Endothelial cell of umbilical vein (primary cell): ENCODE measurements at regions of chr10 and their contacts with region 1.

Region 1: GRCh38 chr10:21533467-21534279 is at the start of gene MLLT10:
- DNase-seq: peak; percentile 97
- H3K4me3 ChIP-seq: peak within 1 kb of the TSS; percentile 80 to 93 (median 83)
- H3K27ac ChIP-seq: peak within 1 kb of the TSS; percentile 60
- H3K4me1 ChIP-seq: peaks cover 17% of the 10 kb centered on the region
- H3K27me3 ChIP-seq: no peaks in the 10 kb centered on the region
- CTCF ChIP-seq: no peak
- POLR2A ChIP-seq: peak; percentile 83
- total RNA-seq, gene MLLT10: 54.0 and 54.6 TPM in 2 replicates

Region 2: DNA sequence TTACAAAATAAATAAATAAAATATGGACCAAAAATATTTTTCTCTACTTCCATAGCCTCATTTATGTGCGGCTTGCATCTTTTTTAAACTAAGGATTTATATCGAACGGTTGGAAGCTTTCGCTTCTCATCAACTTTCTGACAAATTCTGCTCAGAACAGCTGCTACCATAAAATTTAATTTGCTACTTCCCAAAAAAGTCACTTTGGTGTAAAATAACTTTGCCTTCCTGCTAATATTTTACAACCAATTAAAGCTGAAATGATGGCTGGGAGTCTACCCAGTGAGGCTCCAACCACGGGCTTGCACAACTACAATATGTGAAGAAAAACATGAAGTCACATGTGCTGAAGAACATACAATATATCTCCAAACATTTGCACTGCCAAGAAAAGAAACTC is 383.5 kb before region 1 on chr10:
- CTCF ChIA-PET with region 1: no interaction called
- POLR2A ChIA-PET with region 1: no interaction called
- dilution Hi-C with region 1: no loop called
- intact Hi-C with region 1: no loop called
- DNase-seq: no peak
- H3K4me3 ChIP-seq: no peak overlapping the region
- H3K27ac ChIP-seq: no peak overlapping the region
- H3K4me1 ChIP-seq: no peaks in the 10 kb centered on the region
- H3K27me3 ChIP-seq: peaks cover 0 to 3% of the 10 kb centered on the region in 2 experiments
- CTCF ChIP-seq: no peak
- POLR2A ChIP-seq: no peak

Region 3: DNA sequence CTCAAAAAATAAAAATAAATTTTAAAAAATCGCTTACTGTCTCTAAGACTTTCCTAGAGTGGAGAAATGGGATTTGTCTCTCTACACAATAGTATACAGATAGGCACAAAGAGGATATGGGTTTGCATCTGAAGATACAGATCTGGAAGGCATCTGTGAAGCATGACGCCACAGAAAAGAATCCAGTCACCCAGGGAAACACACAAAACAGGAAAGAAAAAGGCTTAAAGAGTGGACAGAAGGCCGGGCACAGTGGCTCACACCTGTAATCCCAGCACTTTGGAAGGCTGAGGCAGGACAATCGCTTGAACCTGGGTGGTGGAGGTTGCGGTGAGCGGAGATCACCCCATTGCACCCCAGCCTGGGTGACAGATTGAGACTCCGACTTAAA is 69.5 kb before region 1 on chr10:
- CTCF ChIA-PET with region 1: no interaction called
- POLR2A ChIA-PET with region 1: no interaction called
- dilution Hi-C with region 1: no loop called
- intact Hi-C with region 1: no loop called
- DNase-seq: no peak
- H3K4me3 ChIP-seq: no peak overlapping the region
- H3K27ac ChIP-seq: no peak overlapping the region
- H3K4me1 ChIP-seq: no peaks in the 10 kb centered on the region
- H3K27me3 ChIP-seq: no peaks in the 10 kb centered on the region
- CTCF ChIP-seq: no peak
- POLR2A ChIP-seq: no peak

Region 4: DNA sequence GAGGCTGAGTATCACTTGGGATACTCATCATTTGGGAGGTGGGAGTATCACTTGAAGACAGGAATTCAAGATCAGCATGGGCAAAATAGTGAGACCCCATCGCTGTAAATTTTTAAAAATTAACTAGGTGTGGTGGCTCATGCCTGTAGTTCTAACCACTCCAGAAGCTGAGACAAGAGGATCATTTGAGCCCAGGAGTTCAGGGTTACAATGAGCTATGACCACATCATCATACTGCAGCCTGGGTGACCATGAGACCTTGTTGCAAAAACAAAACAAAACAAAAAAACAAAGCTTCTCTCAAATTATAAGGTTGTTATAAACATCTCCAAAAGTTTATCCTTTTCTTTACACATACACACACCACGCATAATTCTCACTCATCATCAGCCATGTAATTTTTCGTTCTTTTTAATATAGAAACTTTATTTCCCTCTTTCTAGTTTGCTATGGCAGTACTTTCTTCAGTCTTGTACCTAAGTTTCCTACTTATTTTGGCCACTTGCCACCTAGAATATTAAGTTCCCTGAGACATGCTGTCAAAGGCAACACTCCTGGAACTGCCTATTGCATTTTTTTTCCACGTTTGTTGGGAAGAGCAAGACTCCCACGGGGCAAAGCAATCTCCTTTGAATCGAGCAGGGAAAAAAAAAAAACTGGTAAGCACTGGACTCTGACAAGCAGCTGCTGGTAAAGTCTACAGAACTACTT is 45.3 kb before region 1 on chr10:
- CTCF ChIA-PET with region 1: no interaction called
- POLR2A ChIA-PET with region 1: no interaction called
- dilution Hi-C with region 1: no loop called
- intact Hi-C with region 1: no loop called
- DNase-seq: peak; percentile 26
- H3K4me3 ChIP-seq: no peak overlapping the region
- H3K27ac ChIP-seq: no peak overlapping the region
- H3K4me1 ChIP-seq: no peaks in the 10 kb centered on the region
- H3K27me3 ChIP-seq: no peaks in the 10 kb centered on the region
- CTCF ChIP-seq: no peak
- POLR2A ChIP-seq: no peak

Region 5: GRCh38 chr10:21516242-21517131 is 17.2 kb before region 1 on chr10:
- CTCF ChIA-PET with region 1: interaction called, 7 read pairs
- POLR2A ChIA-PET with region 1: interaction called, 3 read pairs
- dilution Hi-C with region 1: no loop called
- intact Hi-C with region 1: loop called (anchors 1 kb)
- DNase-seq: peak; percentile 53
- H3K4me3 ChIP-seq: peak overlapping the region; percentile 31 to 63 (median 40)
- H3K27ac ChIP-seq: no peak overlapping the region
- H3K4me1 ChIP-seq: peaks cover 26% of the 10 kb centered on the region
- H3K27me3 ChIP-seq: no peaks in the 10 kb centered on the region
- CTCF ChIP-seq: no peak
- POLR2A ChIP-seq: no peak